Naive thymus-derived CD4-positive, alpha-beta T cell (primary cell): ENCODE measurements at regions of chr9 and their contacts with region 1.

Region 1: DNA sequence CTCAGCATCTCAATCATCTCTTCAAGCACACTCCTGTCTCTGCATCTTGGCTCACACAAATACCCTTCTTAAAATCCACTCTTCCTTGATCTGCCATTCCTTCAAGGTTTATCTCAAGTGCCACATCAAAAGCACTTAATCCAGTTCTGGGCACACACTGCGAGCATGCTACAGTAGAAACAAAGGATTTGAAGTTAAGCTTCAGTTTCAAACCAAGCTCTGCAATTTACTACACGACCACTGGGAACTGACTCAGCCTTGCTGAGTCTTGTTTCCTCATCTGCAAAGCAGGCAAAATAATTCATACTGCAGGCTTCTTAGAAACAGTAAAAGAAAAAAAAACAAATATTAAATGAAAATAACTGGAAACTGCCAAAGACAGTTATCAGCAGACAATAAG is 50.5 kb upstream of the CTNNAL1 start:
- DNase-seq: no peak
- ATAC-seq: no peak
- H3K4me3 ChIP-seq: no peak overlapping the region
- H3K4me3 Mint-ChIP-seq: no peak overlapping the region
- H3K27ac ChIP-seq: no peak overlapping the region
- H3K27ac Mint-ChIP-seq: peak overlapping the region in 1 of 9 donors; percentile 6
- H3K4me1 ChIP-seq: no peaks in the 10 kb centered on the region
- H3K4me1 Mint-ChIP-seq: peaks cover 0 to 4% (median 0%) of the 10 kb centered on the region in 7 donors
- H3K27me3 ChIP-seq: no peaks in the 10 kb centered on the region
- H3K27me3 Mint-ChIP-seq: no peaks in the 10 kb centered on the region

Region 2: GRCh38 chr9:109001275-109001676 is 62.5 kb before region 1 on chr9:
- CTCF ChIA-PET with region 1: no interaction called
- POLR2A ChIA-PET with region 1: no interaction called
- intact Hi-C with region 1: no loop called
- DNase-seq: no peak
- ATAC-seq: no peak
- H3K4me3 ChIP-seq: no peak overlapping the region
- H3K4me3 Mint-ChIP-seq: peak overlapping the region in 1 of 10 donors; percentile 36
- H3K27ac ChIP-seq: no peak overlapping the region
- H3K27ac Mint-ChIP-seq: peak overlapping the region in 1 of 9 donors; percentile 22
- H3K4me1 ChIP-seq: no peaks in the 10 kb centered on the region
- H3K4me1 Mint-ChIP-seq: peaks cover 0 to 13% (median 9%) of the 10 kb centered on the region in 7 donors
- H3K27me3 ChIP-seq: no peaks in the 10 kb centered on the region
- H3K27me3 Mint-ChIP-seq: peaks cover 0 to 4% (median 2%) of the 10 kb centered on the region in 5 donors

Region 3: DNA sequence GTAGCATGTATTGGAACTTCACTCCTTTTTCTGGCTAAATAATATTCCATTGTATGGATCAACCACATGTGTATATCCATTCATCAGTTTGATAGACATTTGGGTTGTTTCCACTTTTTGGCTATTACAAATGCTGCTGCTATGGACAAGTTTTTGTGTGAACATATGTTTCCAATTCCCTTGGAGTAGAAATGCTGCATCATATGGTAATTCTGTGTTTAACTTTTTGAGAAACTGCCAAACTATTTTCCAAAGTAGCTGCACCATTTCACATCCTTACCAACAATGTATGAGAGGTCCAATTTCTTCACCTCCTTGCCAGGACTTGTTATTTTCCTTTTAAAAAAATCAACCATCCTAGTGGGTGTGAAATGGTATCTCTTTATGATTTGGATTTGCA is 94.9 kb after region 1 on chr9:
- CTCF ChIA-PET with region 1: no interaction called
- POLR2A ChIA-PET with region 1: no interaction called
- intact Hi-C with region 1: no loop called
- DNase-seq: no peak
- ATAC-seq: no peak
- H3K4me3 ChIP-seq: no peak overlapping the region
- H3K4me3 Mint-ChIP-seq: no peak overlapping the region
- H3K27ac ChIP-seq: no peak overlapping the region
- H3K27ac Mint-ChIP-seq: no peak overlapping the region
- H3K4me1 ChIP-seq: no peaks in the 10 kb centered on the region
- H3K4me1 Mint-ChIP-seq: no peaks in the 10 kb centered on the region
- H3K27me3 ChIP-seq: no peaks in the 10 kb centered on the region
- H3K27me3 Mint-ChIP-seq: peaks cover 8 to 31% (median 24%) of the 10 kb centered on the region in 5 donors

Region 4: DNA sequence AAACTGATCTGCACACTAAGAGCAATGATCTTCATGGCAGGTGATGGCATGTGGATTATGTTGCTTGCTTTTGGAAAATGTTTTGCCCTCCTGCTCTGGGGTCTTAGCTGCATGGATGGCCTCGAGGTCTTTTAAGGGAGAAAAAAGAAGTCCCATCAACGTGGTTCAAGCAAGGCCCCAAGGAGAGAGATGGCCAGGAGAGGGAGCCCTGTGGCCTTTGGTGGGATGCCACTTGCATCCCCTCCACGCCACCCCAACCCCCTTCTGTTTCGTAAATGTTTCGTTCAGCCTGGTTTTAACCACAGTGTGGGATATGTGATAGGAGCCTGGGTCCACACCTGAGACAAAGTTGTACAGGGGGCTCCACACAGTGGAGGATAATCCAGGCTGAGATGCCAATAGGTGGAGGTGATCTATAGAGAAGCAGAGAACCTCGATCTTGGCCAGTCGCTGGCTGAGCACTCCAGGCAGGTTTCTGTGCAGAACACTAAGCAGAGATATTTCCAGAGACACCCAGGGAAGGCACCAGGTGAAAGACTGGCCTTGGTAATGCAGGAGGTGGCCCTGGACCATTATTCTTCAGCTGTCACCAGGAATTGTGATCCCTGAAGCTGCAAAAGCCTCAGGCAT is 129.1 kb after region 1 on chr9:
- CTCF ChIA-PET with region 1: no interaction called
- POLR2A ChIA-PET with region 1: no interaction called
- intact Hi-C with region 1: loop called in 1 of 2 experiments (anchors 10 kb)
- DNase-seq: no peak
- ATAC-seq: no peak
- H3K4me3 ChIP-seq: no peak overlapping the region
- H3K4me3 Mint-ChIP-seq: no peak overlapping the region
- H3K27ac ChIP-seq: no peak overlapping the region
- H3K27ac Mint-ChIP-seq: no peak overlapping the region
- H3K4me1 ChIP-seq: no peaks in the 10 kb centered on the region
- H3K4me1 Mint-ChIP-seq: peaks cover 0 to 4% (median 0%) of the 10 kb centered on the region in 7 donors
- H3K27me3 ChIP-seq: no peaks in the 10 kb centered on the region
- H3K27me3 Mint-ChIP-seq: peaks cover 0 to 11% (median 0%) of the 10 kb centered on the region in 5 donors

Region 5: DNA sequence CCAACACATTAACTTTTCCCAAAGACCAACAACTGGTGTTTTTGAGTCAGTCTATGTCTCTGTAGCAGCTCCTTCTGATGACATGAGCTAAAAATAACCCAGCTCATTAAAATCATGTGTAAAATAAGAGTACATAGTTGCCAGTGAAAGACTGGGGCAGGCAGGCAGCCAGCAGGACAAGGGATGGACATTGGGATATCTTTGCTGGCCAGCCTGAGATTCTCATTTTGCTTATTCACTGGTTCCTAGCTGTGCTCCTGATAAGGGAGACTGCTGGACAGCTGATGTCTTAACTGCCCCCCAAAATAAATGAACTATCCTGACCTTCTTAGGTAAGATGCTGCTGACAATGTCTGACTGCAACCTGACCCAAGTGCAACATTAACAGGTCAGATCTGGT is 223.2 kb after region 1 on chr9:
- CTCF ChIA-PET with region 1: no interaction called
- POLR2A ChIA-PET with region 1: no interaction called
- intact Hi-C with region 1: no loop called
- DNase-seq: no peak
- ATAC-seq: no peak
- H3K4me3 ChIP-seq: no peak overlapping the region
- H3K4me3 Mint-ChIP-seq: no peak overlapping the region
- H3K27ac ChIP-seq: no peak overlapping the region
- H3K27ac Mint-ChIP-seq: no peak overlapping the region
- H3K4me1 ChIP-seq: no peaks in the 10 kb centered on the region
- H3K4me1 Mint-ChIP-seq: peaks cover 0 to 4% (median 0%) of the 10 kb centered on the region in 7 donors
- H3K27me3 ChIP-seq: no peaks in the 10 kb centered on the region
- H3K27me3 Mint-ChIP-seq: peaks cover 0 to 21% (median 17%) of the 10 kb centered on the region in 5 donors